Activated B cell treated with CpG ODN at 0.5 μM for 24 hours (primary cell): ENCODE measurements at regions of chr7 and their contacts with region 1.

Region 1: GRCh38 chr7:92621026-92621540 is 30.9 kb upstream of the FAM133B start:
- DNase-seq: no peak
- ATAC-seq: peak; percentile 78
- H3K4me3 Mint-ChIP-seq: peak overlapping the region; percentile 17
- H3K27ac Mint-ChIP-seq: peak overlapping the region; percentile 76
- H3K4me1 Mint-ChIP-seq: peaks cover 22% of the 10 kb centered on the region
- H3K27me3 Mint-ChIP-seq: no peaks in the 10 kb centered on the region
- CTCF ChIP-seq: no peak

Region 2: GRCh38 chr7:92588561-92588960 is 32.5 kb before region 1 on chr7:
- CTCF ChIA-PET with region 1: no interaction called
- POLR2A ChIA-PET with region 1: interaction called, 7 read pairs
- intact Hi-C with region 1: loop called (anchors 1 kb)
- DNase-seq: no peak
- ATAC-seq: no peak
- H3K4me3 Mint-ChIP-seq: peak overlapping the region; percentile 80
- H3K27ac Mint-ChIP-seq: peak overlapping the region; percentile 80
- H3K4me1 Mint-ChIP-seq: peaks cover 59% of the 10 kb centered on the region
- H3K27me3 Mint-ChIP-seq: no peaks in the 10 kb centered on the region
- CTCF ChIP-seq: no peak

Region 3: DNA sequence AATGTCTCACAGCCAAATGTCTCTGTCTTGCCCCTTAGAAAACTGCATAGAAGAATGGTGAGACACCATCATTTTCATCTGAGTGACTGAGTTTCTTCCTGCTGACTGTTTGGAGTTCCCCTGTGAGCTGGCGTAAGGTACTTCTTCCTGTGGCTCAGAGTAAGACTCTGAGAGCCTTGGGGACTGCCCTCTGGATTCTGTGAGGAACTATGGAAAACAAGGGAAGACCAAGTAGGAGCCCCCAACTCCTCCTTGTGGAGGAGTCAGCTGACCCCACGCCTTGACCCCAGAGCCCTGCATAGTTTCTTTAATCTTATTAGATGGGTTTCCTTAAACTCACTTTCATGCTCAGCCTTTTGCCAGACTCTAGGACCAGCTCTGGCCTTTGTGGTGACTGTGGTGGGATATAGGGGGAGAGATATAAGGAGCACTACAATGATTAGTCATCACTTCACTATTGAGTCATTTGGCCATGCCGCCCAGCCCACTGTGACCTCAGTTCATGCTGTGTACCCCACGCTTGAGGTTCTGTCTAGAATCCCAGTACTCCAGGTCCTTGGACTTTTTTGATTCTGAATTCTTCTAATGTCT is 20.9 kb after region 1 on chr7:
- CTCF ChIA-PET with region 1: interaction called, 9 read pairs
- POLR2A ChIA-PET with region 1: interaction called, 3 read pairs
- intact Hi-C with region 1: loop called (anchors 1 kb)
- DNase-seq: no peak
- ATAC-seq: peak; percentile 78
- H3K4me3 Mint-ChIP-seq: peak overlapping the region; percentile 59
- H3K27ac Mint-ChIP-seq: peak overlapping the region; percentile 90
- H3K4me1 Mint-ChIP-seq: peaks cover 48% of the 10 kb centered on the region
- H3K27me3 Mint-ChIP-seq: no peaks in the 10 kb centered on the region
- CTCF ChIP-seq: no peak

Region 4: GRCh38 chr7:92717993-92718716 is 97.1 kb after region 1 on chr7:
- CTCF ChIA-PET with region 1: interaction called, 3 read pairs
- POLR2A ChIA-PET with region 1: no interaction called
- intact Hi-C with region 1: loop called (anchors 1 kb)
- DNase-seq: peak; percentile 16
- ATAC-seq: peak; percentile 87
- H3K4me3 Mint-ChIP-seq: peak overlapping the region; percentile 90
- H3K27ac Mint-ChIP-seq: peak overlapping the region; percentile 82
- H3K4me1 Mint-ChIP-seq: peaks cover 20% of the 10 kb centered on the region
- H3K27me3 Mint-ChIP-seq: no peaks in the 10 kb centered on the region
- CTCF ChIP-seq: no peak

Region 5: DNA sequence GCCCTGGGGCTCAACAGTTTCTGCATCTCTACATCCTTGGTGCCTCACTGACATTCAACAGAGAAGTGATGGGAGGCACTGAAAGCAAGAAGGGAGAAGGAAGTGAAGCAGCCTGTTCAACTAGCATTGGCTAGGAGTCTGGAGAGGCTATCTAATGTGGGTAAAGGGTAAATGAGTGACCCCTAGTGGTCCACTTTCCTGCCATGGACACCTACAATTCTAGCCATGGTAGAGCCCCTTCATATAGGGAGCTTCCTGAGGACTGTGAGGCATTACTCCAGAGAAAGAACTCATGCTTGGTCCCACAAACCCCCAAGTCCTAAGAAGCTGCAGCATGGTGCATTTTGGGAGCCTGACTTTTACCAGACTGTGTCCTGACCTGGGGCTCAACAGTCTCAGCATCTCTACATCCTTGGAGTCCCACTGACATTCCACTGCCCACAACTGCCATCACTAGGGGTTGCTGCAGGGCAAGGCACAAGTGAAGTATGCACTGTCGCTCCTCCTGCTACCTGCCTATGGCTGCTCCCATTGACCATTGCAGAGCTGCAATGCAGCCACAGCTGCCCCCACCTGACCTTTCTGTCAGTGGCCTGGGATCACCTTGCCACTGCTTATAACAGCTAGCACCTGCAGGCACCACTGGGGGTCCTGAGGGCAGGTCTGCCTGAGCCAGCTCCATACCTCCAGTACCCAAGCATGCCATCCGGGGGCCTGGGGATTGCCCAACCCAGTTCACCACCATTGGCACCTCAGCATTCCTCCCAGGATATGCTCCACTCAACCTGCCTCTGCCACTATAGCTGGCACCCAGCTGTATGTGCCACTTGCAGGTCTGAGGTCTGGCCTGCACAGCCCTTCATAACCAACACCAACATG is 259.4 kb after region 1 on chr7:
- CTCF ChIA-PET with region 1: interaction called, 3 read pairs
- POLR2A ChIA-PET with region 1: no interaction called
- intact Hi-C with region 1: loop called (anchors 1 kb)
- DNase-seq: no peak
- ATAC-seq: peak; percentile 42
- H3K4me3 Mint-ChIP-seq: no peak overlapping the region
- H3K27ac Mint-ChIP-seq: no peak overlapping the region
- H3K4me1 Mint-ChIP-seq: no peaks in the 10 kb centered on the region
- H3K27me3 Mint-ChIP-seq: no peaks in the 10 kb centered on the region
- CTCF ChIP-seq: no peak